ENCODE measurements at regions of chr5 and their contacts with region 1.

Region 1: GRCh38 chr5:154945695-154946301 is 4.9 kb downstream of the MRPL22 start:
- DNase-seq: no peak
- H3K4me3 ChIP-seq: no peak overlapping the region
- CTCF ChIP-seq: peak; percentile 29

Region 2: DNA sequence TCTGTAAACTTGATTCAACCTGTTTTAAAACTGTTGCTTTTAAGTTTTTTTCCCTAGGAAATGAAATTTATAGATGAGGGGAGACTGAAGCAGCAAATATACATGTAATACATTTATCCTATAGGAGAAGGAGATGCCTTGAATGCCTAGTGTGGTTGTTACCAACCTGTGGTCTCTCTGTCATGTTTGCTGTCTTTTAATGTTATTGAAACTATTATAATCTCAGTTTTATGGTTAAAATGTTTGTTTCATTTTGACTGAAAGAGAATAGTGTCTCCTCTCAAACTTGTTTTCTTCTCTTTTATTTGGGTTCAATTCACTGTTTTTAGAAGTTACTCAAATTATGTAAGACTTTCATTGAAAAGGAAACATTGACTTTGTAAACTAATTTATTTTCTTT is 10.9 kb after region 1 on chr5:
- CTCF ChIA-PET with region 1: interaction called, 13 read pairs
- POLR2A ChIA-PET with region 1: no interaction called
- DNase-seq: no peak
- H3K4me3 ChIP-seq: no peak overlapping the region
- CTCF ChIP-seq: no peak

Region 3: DNA sequence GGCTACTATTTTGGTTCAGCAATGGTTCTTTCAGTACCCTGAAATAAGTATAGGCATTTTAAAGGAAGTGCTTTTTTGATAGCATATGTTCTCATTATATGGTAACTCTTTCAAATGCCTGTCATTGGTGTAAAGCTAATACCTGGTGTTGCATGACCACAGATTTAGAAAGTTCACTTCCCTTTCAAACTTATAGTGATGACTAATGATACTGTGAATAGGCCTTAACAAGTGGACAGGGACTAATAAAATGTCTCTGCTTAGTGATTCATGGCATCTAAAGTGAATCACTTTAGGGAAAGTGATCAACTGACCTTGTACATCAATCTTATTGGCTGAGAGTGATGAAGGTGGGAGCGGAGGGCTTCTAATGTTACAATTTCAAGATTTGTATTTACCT is 16.7 kb after region 1 on chr5:
- CTCF ChIA-PET with region 1: interaction called, 13 read pairs
- POLR2A ChIA-PET with region 1: no interaction called
- DNase-seq: no peak
- H3K4me3 ChIP-seq: no peak overlapping the region
- CTCF ChIP-seq: no peak

Region 4: GRCh38 chr5:155147222-155147621 is 201.4 kb after region 1 on chr5:
- CTCF ChIA-PET with region 1: interaction called, 33 read pairs
- POLR2A ChIA-PET with region 1: no interaction called
- DNase-seq: no peak
- H3K4me3 ChIP-seq: no peak overlapping the region
- CTCF ChIP-seq: no peak

Measured in AG04449 (cell line).